OCI-LY7 (cell line): ENCODE measurements at regions of chr20 and their contacts with region 1.

Region 1: GRCh38 chr20:5608442-5609161 is 141.6 kb upstream of the SHLD1 start:
- DNase-seq: no peak
- H3K4me3 ChIP-seq: peak overlapping the region; percentile 79
- H3K27ac ChIP-seq: peak overlapping the region; percentile 94
- H3K4me1 ChIP-seq: peaks cover 38% of the 10 kb centered on the region
- CTCF ChIP-seq: no peak

Region 2: GRCh38 chr20:5569021-5569420 is 39.6 kb before region 1 on chr20:
- CTCF ChIA-PET with region 1: no interaction called
- POLR2A ChIA-PET with region 1: interaction called, 8 read pairs
- intact Hi-C with region 1: loop called (anchors 1 kb)
- DNase-seq: peak; percentile 83
- H3K4me3 ChIP-seq: no peak overlapping the region
- H3K27ac ChIP-seq: peak overlapping the region; percentile 52
- H3K4me1 ChIP-seq: peaks cover 39% of the 10 kb centered on the region
- CTCF ChIP-seq: peak; percentile 94

Region 3: DNA sequence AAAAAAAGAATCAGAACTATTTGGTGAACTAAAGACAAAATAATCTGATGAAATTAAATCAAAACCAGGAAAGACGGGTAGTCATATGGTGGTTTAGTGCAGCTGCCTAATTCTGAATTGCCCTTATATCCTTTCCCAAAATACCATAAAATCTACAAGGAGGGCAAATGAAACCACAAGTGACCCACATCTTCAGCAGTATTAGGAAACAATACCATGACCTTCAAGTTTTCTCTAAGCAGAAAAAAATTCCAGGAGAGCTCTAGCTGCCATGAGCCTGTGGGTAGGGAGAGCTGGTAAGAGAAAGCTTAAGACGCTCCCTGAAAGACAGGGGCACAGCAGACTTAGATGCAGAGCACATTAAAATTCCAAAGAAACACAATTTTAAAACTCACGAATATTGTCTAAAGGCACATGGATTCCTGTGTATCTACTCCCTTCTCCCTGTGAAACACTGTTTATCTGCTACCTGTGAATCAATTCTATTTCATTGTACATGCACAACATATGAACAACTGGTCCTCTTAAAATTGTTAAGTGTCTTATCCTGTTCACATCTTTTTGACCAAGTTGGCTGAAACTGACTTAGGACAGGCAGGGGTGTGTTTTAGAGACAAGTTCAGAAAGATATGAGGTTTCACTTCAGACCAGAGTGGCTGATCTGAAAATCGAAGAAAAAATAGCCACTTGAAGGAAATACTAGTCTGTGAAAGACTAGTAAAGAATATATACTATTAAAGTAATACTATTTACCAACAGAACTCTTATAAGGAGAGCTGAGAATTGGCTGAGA is 12.0 kb before region 1 on chr20:
- CTCF ChIA-PET with region 1: interaction called, 20 read pairs
- POLR2A ChIA-PET with region 1: interaction called, 3 read pairs
- intact Hi-C with region 1: loop called (anchors 2 kb)
- DNase-seq: no peak
- H3K4me3 ChIP-seq: peak overlapping the region; percentile 3
- H3K27ac ChIP-seq: peak overlapping the region; percentile 97
- H3K4me1 ChIP-seq: peaks cover 100% of the 10 kb centered on the region
- CTCF ChIP-seq: no peak

Region 4: GRCh38 chr20:5621305-5621704 is 12.7 kb after region 1 on chr20:
- CTCF ChIA-PET with region 1: no interaction called
- POLR2A ChIA-PET with region 1: interaction called, 11 read pairs
- intact Hi-C with region 1: no loop called
- DNase-seq: no peak
- H3K4me3 ChIP-seq: no peak overlapping the region
- H3K27ac ChIP-seq: no peak overlapping the region
- H3K4me1 ChIP-seq: no peaks in the 10 kb centered on the region
- CTCF ChIP-seq: no peak

Region 5: DNA sequence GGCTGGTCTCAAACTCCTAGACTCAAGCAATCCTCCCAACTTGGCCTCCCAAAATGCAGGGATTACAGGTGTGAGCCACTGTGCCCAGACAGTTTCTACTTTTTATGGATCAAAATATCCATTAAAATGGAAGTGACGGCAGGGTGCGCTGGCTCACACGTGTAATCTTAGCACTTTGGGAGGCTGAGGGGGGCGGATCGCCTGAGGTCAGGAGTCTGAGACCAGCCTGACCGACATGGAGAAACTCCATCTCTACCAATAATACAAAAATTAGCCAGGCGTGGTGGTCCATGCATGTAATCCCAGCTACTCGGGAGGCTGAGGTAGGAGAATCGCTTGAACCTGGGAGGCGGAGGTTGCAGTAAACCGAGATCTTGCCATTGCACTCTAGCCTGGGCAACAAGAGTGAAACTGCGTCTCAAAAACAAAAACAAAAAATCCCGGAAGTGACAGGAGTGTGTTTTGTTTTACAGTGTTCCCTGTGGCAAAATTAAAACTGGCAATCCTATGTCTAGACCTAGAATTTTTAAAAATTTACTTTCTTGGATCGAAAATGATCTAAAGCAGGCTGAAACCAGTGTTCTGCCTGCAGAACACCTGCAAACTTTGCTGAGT is 25.3 kb after region 1 on chr20:
- CTCF ChIA-PET with region 1: no interaction called
- POLR2A ChIA-PET with region 1: no interaction called
- intact Hi-C with region 1: no loop called
- DNase-seq: no peak
- H3K4me3 ChIP-seq: no peak overlapping the region
- H3K27ac ChIP-seq: no peak overlapping the region
- H3K4me1 ChIP-seq: peaks cover 15% of the 10 kb centered on the region
- CTCF ChIP-seq: no peak

Region 6: DNA sequence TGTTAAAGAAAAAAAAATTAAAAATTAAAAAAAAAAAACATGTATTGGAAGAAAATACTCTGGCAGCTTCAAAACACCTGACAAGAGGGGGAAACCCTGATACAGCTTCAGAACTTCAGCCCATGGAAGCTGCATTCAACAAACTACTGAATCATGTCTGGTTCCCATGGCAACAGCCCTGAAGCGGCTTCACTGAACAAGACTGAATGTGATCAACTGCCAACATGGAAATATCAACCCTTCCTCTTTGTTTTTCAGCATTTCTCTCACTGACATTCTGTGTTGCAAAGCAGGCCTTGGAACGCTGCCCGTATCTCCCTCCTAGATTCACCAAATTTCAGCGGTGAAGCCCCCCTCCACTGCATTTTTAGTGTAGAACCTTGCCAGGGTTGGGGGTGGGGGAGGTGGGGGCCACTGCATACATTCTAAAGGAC is 50.3 kb after region 1 on chr20:
- CTCF ChIA-PET with region 1: interaction called, 3 read pairs
- POLR2A ChIA-PET with region 1: interaction called, 14 read pairs
- intact Hi-C with region 1: no loop called
- DNase-seq: peak; percentile 92
- H3K4me3 ChIP-seq: peak overlapping the region; percentile 19
- H3K27ac ChIP-seq: peak overlapping the region; percentile 88
- H3K4me1 ChIP-seq: peaks cover 92% of the 10 kb centered on the region
- CTCF ChIP-seq: 0 out of 2 replicates have a peak, but pooled peaks have one; percentile 1

Region 7: DNA sequence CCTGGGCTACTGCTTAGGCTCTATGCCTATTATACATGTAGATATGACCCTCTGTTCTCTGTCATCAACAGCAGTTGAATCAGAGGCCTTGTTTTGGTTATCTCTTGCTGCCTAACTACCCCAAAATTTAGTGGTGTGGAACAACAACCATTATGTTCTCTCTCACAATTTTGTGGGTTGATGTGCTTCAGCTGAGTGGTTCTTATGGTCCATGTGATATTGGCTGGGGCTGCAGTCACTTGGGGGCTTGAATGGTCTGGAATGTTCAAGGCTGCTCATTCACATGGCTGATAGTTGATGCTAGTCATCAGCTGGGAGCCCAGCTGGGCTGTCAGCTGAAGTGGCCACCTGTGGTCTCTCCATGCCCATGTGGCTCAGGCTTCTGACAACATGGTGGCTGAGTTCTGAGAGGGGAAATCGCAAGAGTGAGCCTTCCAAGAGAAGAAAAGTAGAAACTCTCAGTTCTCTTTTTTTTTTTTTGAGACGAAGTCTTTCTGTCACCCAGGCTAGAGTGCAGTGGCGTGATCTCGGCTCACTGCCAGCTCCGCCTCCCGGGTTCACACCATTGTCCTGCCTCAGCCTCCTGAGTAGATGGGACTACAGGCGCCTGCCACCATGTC is 189.4 kb after region 1 on chr20:
- CTCF ChIA-PET with region 1: interaction called, 3 read pairs
- POLR2A ChIA-PET with region 1: interaction called, 12 read pairs
- intact Hi-C with region 1: no loop called
- DNase-seq: peak; percentile 98
- H3K4me3 ChIP-seq: peak overlapping the region; percentile 14
- H3K27ac ChIP-seq: peak overlapping the region; percentile 97
- H3K4me1 ChIP-seq: peaks cover 95% of the 10 kb centered on the region
- CTCF ChIP-seq: no peak